Uterus (tissue), 4 donors: ENCODE measurements at regions of chr2 and their contacts with region 1.

Region 1: GRCh38 chr2:7044261-7045250 is 127.3 kb downstream of the RNF144A start:
- DNase-seq: peak; percentile 76 to 79
- H3K4me3 ChIP-seq: no peak overlapping the region
- H3K27ac ChIP-seq: peak overlapping the region; percentile 22 to 24
- H3K4me1 ChIP-seq: peaks cover 0 to 5% of the 10 kb centered on the region in 2 donors
- H3K27me3 ChIP-seq: no peaks in the 10 kb centered on the region
- CTCF ChIP-seq: peak; percentile 84 to 95 (median 86)
- POLR2A ChIP-seq: no peak

Region 2: DNA sequence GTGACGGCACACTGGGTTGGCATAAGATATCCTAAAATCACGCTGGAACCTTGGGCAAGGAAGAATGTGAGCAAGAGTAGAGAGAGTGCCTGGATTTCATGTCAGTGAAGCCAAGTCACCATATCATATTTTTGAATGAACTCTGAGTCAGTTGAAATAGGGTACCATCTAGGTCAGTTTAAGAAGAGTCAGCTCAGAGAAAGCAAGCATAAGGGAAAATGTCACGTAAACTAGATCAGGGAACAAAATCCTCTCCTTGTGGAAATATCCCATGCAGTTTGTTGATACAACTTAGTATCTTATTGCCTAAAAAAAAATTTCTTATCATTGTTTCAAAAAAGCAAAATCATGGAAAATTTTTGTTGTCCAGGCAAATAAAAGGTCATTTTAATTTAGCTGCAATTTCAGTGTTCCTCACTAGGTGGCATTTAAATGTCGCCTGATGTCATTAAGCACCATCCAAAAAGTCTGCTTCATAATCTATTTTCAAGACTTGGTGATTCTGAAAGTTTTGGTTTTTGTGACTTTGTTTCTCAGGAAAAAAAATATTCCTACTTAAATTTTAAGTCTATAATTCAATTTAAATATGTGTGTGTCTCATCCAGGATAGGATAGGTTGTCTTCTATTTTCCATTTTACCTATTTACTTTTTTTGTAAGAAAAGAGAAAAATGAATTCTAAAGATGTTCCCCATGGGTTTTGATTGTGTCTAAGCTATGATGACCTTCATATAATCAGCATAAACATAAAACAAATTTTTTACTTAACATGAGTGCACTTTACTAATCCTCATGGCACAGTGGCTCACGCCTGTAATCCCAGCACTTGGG is 147.4 kb before region 1 on chr2:
- intact Hi-C with region 1: loop called (anchors 10 kb)
- DNase-seq: no peak
- H3K4me3 ChIP-seq: no peak overlapping the region
- H3K27ac ChIP-seq: peak overlapping the region in 1 of 2 donors; percentile 25
- H3K4me1 ChIP-seq: no peaks in the 10 kb centered on the region
- H3K27me3 ChIP-seq: no peaks in the 10 kb centered on the region
- CTCF ChIP-seq: peak; percentile 64 to 86 (median 74)
- POLR2A ChIP-seq: no peak

Region 3: GRCh38 chr2:7363906-7364305 is 319.4 kb after region 1 on chr2:
- intact Hi-C with region 1: no loop called
- DNase-seq: no peak
- H3K4me3 ChIP-seq: no peak overlapping the region
- H3K27ac ChIP-seq: no peak overlapping the region
- H3K4me1 ChIP-seq: no peaks in the 10 kb centered on the region
- H3K27me3 ChIP-seq: no peaks in the 10 kb centered on the region
- CTCF ChIP-seq: no peak
- POLR2A ChIP-seq: no peak